IMR-90 (cell line): ENCODE measurements at regions of chr22 and their contacts with region 1.

Region 1: GRCh38 chr22:24289741-24290163 is 19.1 kb downstream of the SPECC1L start:
- DNase-seq: peak; percentile 7
- ATAC-seq: peak; percentile 36
- H3K4me3 ChIP-seq: no peak overlapping the region
- H3K27ac ChIP-seq: peak overlapping the region; percentile 57
- H3K4me1 ChIP-seq: peaks cover 17% of the 10 kb centered on the region
- H3K27me3 ChIP-seq: no peaks in the 10 kb centered on the region
- CTCF ChIP-seq: no peak
- POLR2A ChIP-seq: no peak
- RAD21 ChIP-seq: no peak

Region 2: GRCh38 chr22:24305260-24305692 is 15.5 kb after region 1 on chr22:
- CTCF ChIA-PET with region 1: no interaction called
- POLR2A ChIA-PET with region 1: no interaction called
- dilution Hi-C with region 1: no loop called
- in situ Hi-C with region 1: no loop called
- intact Hi-C with region 1: loop called (anchors 2 kb)
- DNase-seq: peak; percentile 4
- ATAC-seq: no peak
- H3K4me3 ChIP-seq: no peak overlapping the region
- H3K27ac ChIP-seq: no peak overlapping the region
- H3K4me1 ChIP-seq: peaks cover 4% of the 10 kb centered on the region; the same call in 1 of the 2 replicates
- H3K27me3 ChIP-seq: no peaks in the 10 kb centered on the region
- CTCF ChIP-seq: no peak
- POLR2A ChIP-seq: no peak
- RAD21 ChIP-seq: no peak